ENCODE measurements at regions of chr9 and their contacts with region 1.

Region 1: DNA sequence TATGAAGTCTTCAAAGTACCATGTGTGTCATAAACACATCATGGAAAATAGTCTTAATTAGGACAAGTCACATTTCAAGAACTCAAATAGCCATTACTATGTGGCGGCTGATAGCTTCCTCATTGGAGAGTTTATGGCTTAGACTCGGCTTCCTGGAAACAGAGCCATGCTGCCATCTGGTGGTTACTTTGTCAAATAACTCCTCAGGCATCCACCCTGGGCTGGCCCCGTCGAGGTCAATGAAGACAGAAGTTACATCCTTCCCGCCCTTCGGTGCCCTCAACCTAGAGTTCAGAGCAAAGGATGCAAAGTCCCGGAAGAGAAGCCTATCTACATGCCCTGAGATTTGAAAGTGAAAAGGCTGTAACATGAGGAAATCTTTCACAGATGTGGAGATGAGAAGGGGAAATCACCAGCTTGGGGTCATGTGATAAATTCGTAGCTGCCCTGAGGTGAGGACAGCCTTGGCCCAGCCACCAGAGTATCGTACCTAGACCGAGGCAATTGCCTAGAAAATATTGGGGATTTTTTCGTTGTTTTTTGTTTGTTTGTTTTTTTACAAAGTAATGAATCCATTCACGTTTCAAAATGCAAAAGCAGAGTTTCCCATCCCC is 45.5 kb upstream of the ZNF169 start:
- DNase-seq: peak; percentile 76 to 80
- ATAC-seq: peak; percentile 97 to 100
- H3K4me3 ChIP-seq: no peak overlapping the region
- H3K27ac ChIP-seq: no peak overlapping the region
- H3K4me1 ChIP-seq: no peaks in the 10 kb centered on the region
- CTCF ChIP-seq: peak; percentile 90
- EP300 ChIP-seq: no peak
- POLR2A ChIP-seq: no peak
- RAD21 ChIP-seq: peak; percentile 97 to 98

Region 2: GRCh38 chr9:93968451-93969327 is 244.9 kb before region 1 on chr9:
- CTCF ChIA-PET with region 1: interaction called, 12 read pairs
- POLR2A ChIA-PET with region 1: no interaction called
- DNase-seq: no peak
- ATAC-seq: peak; percentile 42 to 46; a peak in 3 of 6 replicates
- H3K4me3 ChIP-seq: no peak overlapping the region
- H3K27ac ChIP-seq: no peak overlapping the region
- H3K4me1 ChIP-seq: peaks cover 5% of the 10 kb centered on the region; the same call in 1 of the 3 replicates
- CTCF ChIP-seq: no peak
- EP300 ChIP-seq: no peak
- POLR2A ChIP-seq: no peak
- RAD21 ChIP-seq: no peak

Region 3: GRCh38 chr9:94056442-94056974 is 157.1 kb before region 1 on chr9:
- CTCF ChIA-PET with region 1: interaction called, 170 read pairs
- POLR2A ChIA-PET with region 1: no interaction called
- DNase-seq: no peak
- ATAC-seq: no peak
- H3K4me3 ChIP-seq: no peak overlapping the region
- H3K27ac ChIP-seq: no peak overlapping the region
- H3K4me1 ChIP-seq: no peaks in the 10 kb centered on the region
- CTCF ChIP-seq: no peak
- EP300 ChIP-seq: no peak
- POLR2A ChIP-seq: no peak
- RAD21 ChIP-seq: no peak

Region 4: DNA sequence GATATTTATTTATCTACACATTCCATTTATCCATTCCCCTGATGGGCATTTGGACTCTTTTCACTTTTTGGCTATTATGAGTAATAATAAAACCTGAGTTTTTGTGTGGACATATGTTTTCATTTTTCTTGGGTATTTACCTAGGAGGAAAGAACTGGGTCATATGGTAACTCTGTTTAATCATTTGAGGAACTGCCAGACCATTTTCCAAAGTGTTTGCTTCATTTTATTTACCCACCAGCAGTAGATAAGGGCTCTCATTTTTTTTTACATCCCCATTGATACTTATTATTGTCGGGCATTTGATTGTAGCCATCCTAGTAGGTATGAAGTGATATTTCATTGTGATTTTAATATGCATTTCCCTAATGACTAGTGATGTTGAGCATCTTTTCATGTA is 137.1 kb before region 1 on chr9:
- CTCF ChIA-PET with region 1: interaction called, 26 read pairs
- POLR2A ChIA-PET with region 1: no interaction called
- DNase-seq: no peak
- ATAC-seq: no peak
- H3K4me3 ChIP-seq: no peak overlapping the region
- H3K27ac ChIP-seq: no peak overlapping the region
- H3K4me1 ChIP-seq: no peaks in the 10 kb centered on the region
- CTCF ChIP-seq: no peak
- EP300 ChIP-seq: no peak
- POLR2A ChIP-seq: no peak
- RAD21 ChIP-seq: no peak

Region 5: DNA sequence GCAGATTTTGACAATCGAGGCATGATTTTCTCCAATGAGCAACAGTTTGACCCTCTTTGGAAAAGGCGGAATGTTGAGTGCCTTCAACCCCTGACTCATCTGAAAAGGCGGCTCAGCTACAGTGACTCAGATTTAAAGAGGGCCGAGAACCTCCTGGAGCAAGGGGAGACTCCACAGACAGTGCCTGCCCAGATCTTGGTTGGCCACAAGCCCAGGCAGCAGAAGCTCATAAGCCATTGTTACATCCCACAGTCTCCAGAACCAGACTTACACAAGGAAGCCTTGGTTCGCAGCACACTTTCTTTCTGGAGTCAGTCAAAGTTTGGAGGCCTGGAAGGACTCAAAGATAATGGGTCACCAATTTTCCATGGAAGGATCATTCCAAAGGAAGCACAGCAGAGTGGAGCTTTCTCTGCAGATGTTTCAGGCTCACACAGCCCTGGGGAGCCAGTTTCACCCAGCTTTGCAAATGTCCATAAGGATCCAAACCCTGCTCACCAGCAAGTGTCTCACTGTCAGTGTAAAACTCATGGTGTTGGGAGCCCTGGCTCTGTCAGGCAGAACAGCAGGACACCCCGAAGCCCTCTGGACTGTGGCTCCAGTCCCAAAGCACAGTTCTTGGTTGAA is 115.7 kb before region 1 on chr9:
- CTCF ChIA-PET with region 1: interaction called, 11 read pairs
- POLR2A ChIA-PET with region 1: no interaction called
- DNase-seq: peak in 1 of 2 experiments; percentile 13
- ATAC-seq: peak; percentile 59 to 86; a peak in 5 of 6 replicates
- H3K4me3 ChIP-seq: no peak overlapping the region
- H3K27ac ChIP-seq: peak overlapping the region in 1 of 2 experiments; percentile 47; a peak in 3 of 6 replicates
- H3K4me1 ChIP-seq: peaks cover 12% of the 10 kb centered on the region; the same call in 2 of the 3 replicates
- CTCF ChIP-seq: no peak
- EP300 ChIP-seq: no peak
- POLR2A ChIP-seq: no peak
- RAD21 ChIP-seq: no peak

Region 6: DNA sequence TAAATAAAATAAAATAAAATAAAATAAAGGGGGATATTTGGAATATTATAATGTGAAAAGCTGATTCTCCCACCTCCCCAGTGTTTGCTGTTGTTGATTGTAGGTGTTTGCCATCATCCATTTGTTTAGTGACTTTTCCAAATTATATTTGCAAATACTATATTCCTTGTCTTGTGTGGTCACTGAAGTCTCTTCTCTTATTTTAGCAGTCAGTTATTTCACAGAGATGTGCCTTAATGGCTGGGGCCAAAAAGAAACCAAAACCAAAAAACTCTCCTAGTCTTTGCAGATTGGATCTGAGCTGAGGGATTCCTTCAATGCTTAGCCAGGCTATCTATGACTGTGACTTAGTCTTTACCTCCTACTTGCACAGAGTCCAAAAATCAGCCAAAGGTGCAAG is 25.4 kb before region 1 on chr9:
- CTCF ChIA-PET with region 1: interaction called, 17 read pairs
- POLR2A ChIA-PET with region 1: no interaction called
- DNase-seq: no peak
- ATAC-seq: no peak
- H3K4me3 ChIP-seq: no peak overlapping the region
- H3K27ac ChIP-seq: no peak overlapping the region
- H3K4me1 ChIP-seq: no peaks in the 10 kb centered on the region
- CTCF ChIP-seq: no peak
- EP300 ChIP-seq: no peak
- POLR2A ChIP-seq: no peak
- RAD21 ChIP-seq: no peak